PC-3 (cell line): ENCODE measurements at regions of chr3 and their contacts with region 1.

Region 1: DNA sequence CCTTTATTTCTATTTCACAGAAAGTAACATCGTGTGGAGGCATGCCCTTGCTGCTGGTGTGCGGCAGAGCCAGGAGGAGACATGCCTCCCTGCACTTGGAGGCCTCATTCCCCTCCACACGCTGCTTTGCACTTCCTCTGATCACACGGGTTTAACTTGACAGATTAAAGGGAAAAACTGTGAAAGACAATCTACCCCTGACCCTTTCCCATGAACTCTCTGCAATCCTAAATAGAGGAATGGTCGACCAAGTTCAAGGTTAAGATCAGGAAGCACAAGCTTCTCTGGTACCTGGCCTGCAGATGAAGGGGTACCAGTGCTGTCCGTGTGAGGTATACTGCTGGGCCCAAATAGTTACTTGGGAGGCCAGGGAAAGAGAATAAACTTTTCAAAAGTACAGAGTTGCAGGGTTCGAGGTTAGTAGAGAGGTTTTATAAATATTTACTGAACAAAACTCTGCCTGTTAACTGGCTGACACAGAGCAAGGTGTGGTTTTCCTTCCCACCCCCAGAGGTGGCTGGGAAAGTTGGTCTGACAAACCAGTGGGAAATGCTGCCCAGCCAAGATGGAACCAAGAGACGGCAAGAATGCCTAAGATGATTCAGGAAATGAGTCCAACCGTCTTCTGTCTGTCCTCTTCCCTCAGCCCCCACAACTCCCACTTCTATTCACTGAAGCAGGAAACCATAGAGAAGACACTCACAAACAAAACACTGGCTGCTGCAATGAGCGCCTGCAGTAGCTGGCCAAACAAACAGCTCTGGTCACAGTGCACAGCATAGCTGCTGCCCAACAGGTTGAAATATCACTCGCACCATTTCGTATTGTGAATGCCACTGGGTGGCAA is 79.6 kb downstream of the IGF2BP2 start:
- DNase-seq: peak; percentile 92
- ATAC-seq: peak; percentile 85
- H3K4me3 ChIP-seq: no peak overlapping the region; the same call in 1 of the 2 replicates
- H3K27ac ChIP-seq: peak overlapping the region; percentile 79
- H3K4me1 ChIP-seq: peaks cover 27% of the 10 kb centered on the region
- H3K27me3 ChIP-seq: no peaks in the 10 kb centered on the region
- CTCF ChIP-seq: no peak

Region 2: DNA sequence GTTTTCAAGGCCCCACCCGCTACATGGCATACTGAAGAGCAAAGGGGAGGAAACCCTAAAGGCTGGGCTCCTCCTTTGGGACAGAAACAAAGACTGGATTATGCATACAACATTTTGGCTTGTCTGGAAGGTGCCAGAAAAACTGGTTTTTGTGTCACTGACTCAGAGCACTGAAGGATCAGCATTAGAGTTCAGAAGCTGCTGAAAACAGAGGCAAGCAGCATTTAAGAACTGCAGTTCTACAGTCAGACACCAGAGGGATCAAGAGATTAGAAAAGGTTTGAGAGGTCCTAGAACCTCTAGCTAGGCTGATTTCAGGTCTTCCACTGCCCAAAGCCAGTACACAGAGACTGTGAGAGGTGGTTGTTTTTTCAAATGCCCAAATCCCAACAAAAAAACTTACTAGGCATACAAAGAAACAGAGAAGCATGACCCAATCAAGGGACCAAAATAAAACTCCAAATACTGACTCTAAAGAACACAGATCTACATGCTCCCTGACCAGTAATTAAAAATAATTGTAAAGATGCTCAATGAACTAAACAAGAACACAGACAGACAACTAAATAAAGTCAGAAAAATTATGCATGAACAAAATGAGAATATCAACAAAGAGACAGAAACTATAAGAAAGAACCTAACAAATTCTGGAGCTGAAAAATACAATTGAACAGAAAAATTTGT is 67.9 kb before region 1 on chr3:
- CTCF ChIA-PET with region 1: no interaction called
- POLR2A ChIA-PET with region 1: interaction called, 28 read pairs
- intact Hi-C with region 1: no loop called
- DNase-seq: peak; percentile 98
- ATAC-seq: peak; percentile 94
- H3K4me3 ChIP-seq: no peak overlapping the region
- H3K27ac ChIP-seq: peak overlapping the region; percentile 38
- H3K4me1 ChIP-seq: no peaks in the 10 kb centered on the region
- H3K27me3 ChIP-seq: no peaks in the 10 kb centered on the region
- CTCF ChIP-seq: peak; percentile 89